PC-3 (cell line): ENCODE measurements at regions of chr17 and their contacts with region 1.

Region 1: GRCh38 chr17:40854159-40854814 is 12.7 kb downstream of the KRT12 start:
- DNase-seq: peak; percentile 84
- ATAC-seq: peak; percentile 81
- H3K4me3 ChIP-seq: no peak overlapping the region
- H3K27ac ChIP-seq: peak overlapping the region; percentile 64
- H3K4me1 ChIP-seq: peaks cover 51% of the 10 kb centered on the region
- H3K27me3 ChIP-seq: no peaks in the 10 kb centered on the region
- CTCF ChIP-seq: no peak

Region 2: DNA sequence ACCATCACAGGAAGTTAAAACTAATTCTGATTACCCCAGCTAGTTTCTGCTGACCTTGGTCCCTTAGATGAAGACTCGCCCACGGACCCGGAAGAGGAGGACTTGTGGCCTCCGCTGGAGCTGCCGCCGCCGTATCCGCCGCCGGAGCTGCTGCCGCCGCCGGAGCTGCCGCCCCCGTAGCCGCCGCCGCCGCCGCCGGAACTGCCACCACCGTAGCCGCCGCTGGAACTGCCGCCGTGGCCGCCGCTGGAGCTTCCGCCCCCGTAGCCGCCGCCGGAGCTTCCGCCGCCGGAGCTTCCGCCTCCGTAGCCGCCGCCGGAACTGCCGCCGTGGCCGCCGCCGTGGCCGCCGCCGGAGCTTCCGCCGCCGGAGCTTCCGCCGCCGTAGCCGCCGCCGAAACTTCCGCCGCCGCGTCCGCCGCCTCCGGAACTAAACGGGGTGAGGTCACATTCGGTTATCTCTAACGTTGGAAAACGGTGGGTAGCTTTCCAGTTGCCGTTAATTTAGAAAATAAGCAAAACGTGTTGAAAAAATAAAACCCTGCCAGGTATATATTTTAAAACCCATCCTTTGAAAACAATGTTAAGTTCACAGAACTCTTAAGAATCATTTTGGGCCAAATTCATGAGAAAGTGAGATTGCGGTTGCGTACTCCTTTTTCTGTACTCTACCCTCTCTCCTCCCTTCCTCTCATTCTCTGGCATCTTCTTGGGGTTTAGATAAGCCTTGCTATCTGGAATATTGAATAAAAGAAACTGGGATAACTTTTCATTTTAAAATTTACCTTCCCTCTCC is 35.4 kb before region 1 on chr17:
- CTCF ChIA-PET with region 1: no interaction called
- POLR2A ChIA-PET with region 1: interaction called, 31 read pairs
- intact Hi-C with region 1: no loop called
- DNase-seq: peak; percentile 63
- ATAC-seq: peak; percentile 86
- H3K4me3 ChIP-seq: peak overlapping the region; percentile 96
- H3K27ac ChIP-seq: peak overlapping the region; percentile 71
- H3K4me1 ChIP-seq: peaks cover 17% of the 10 kb centered on the region; the same call in 1 of the 2 replicates
- H3K27me3 ChIP-seq: no peaks in the 10 kb centered on the region
- CTCF ChIP-seq: no peak